PC-9 (cell line): ENCODE measurements at regions of chr7 and their contacts with region 1.

Region 1: GRCh38 chr7:12524794-12525386 is 45.6 kb upstream of the SCIN start:
- DNase-seq: peak in 1 of 2 experiments; percentile 56
- H3K4me3 ChIP-seq: no peak overlapping the region
- H3K27ac ChIP-seq: no peak overlapping the region
- H3K4me1 ChIP-seq: no peaks in the 10 kb centered on the region
- H3K27me3 ChIP-seq: no peaks in the 10 kb centered on the region
- CTCF ChIP-seq: peak; percentile 85

Region 2: DNA sequence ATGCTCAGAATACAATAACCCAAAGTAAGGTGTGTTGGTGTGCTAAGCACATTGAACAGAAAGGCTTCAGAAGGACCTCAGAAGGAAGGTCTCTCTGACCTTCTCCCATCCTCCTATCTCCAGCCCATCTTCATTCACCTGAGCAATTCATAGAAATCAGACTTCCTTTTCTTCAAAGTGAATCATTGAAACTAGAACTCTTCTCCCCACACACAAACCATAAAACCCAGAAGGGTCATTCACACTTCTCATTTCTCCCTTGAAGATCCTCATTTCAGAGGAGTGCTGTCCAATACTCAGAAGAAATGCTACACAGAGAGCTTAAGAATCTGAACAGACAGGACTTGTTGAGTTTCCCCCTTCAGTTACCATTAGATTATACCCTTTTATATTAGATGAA is 210.7 kb before region 1 on chr7:
- CTCF ChIA-PET with region 1: interaction called, 11 read pairs
- POLR2A ChIA-PET with region 1: no interaction called
- intact Hi-C with region 1: no loop called
- DNase-seq: no peak
- H3K4me3 ChIP-seq: no peak overlapping the region
- H3K27ac ChIP-seq: no peak overlapping the region
- H3K4me1 ChIP-seq: no peaks in the 10 kb centered on the region
- H3K27me3 ChIP-seq: no peaks in the 10 kb centered on the region
- CTCF ChIP-seq: no peak

Region 3: DNA sequence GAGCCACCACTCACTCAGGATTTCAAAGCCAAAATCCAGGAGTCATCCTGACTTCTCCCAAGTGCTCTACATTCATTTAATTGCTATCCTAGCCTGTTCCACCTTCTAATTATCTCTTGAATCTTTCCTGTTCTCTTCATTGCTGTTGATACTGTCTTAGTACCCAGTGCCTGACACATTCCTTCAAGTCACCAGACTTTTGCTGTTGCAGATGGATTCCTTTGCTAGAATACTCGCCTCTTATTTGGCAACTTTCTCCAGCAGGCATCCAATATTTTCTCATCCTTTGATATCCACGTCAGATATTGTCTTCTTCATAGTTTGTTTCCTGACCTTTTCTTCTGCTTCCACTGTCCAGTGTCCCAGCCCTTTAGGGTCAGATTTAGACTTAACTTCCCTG is 60.7 kb after region 1 on chr7:
- CTCF ChIA-PET with region 1: no interaction called
- POLR2A ChIA-PET with region 1: no interaction called
- intact Hi-C with region 1: no loop called
- DNase-seq: no peak
- H3K4me3 ChIP-seq: no peak overlapping the region
- H3K27ac ChIP-seq: no peak overlapping the region
- H3K4me1 ChIP-seq: peaks cover 28% of the 10 kb centered on the region
- H3K27me3 ChIP-seq: 0 out of 2 replicates have a peak, but pooled peaks cover 3% of the 10 kb centered on the region
- CTCF ChIP-seq: no peak

Region 4: GRCh38 chr7:13017333-13017853 is 492.5 kb after region 1 on chr7:
- CTCF ChIA-PET with region 1: no interaction called
- POLR2A ChIA-PET with region 1: no interaction called
- intact Hi-C with region 1: loop called (anchors 10 kb)
- DNase-seq: peak; percentile 23 to 68
- H3K4me3 ChIP-seq: peak overlapping the region; percentile 19; the same call in 1 of the 2 replicates
- H3K27ac ChIP-seq: peak overlapping the region; percentile 19
- H3K4me1 ChIP-seq: peaks cover 16% of the 10 kb centered on the region
- H3K27me3 ChIP-seq: no peaks in the 10 kb centered on the region
- CTCF ChIP-seq: no peak

Region 5: GRCh38 chr7:13262929-13263530 is 738.1 kb after region 1 on chr7:
- CTCF ChIA-PET with region 1: interaction called, 3 read pairs
- POLR2A ChIA-PET with region 1: no interaction called
- intact Hi-C with region 1: loop called (anchors 1 kb)
- DNase-seq: no peak
- H3K4me3 ChIP-seq: no peak overlapping the region
- H3K27ac ChIP-seq: no peak overlapping the region
- H3K4me1 ChIP-seq: no peaks in the 10 kb centered on the region
- H3K27me3 ChIP-seq: no peaks in the 10 kb centered on the region
- CTCF ChIP-seq: peak; percentile 82